Panc1 (cell line): ENCODE measurements at regions of chr1 and their contacts with region 1.

Region 1: GRCh38 chr1:204363335-204364124 is 3.8 kb upstream of the PLEKHA6 start:
- DNase-seq: peak; percentile 71
- ATAC-seq: peak; percentile 79
- H3K4me3 ChIP-seq: peak overlapping the region; percentile 19 to 52
- H3K27ac ChIP-seq: peak overlapping the region; percentile 51
- H3K4me1 ChIP-seq: peaks cover 5% of the 10 kb centered on the region; the same call in 1 of the 2 replicates
- H3K27me3 ChIP-seq: no peaks in the 10 kb centered on the region
- CTCF ChIP-seq: peak; percentile 96

Region 2: GRCh38 chr1:204213668-204214662 is 149.6 kb before region 1 on chr1 and contains the start of gene GOLT1A:
- CTCF ChIA-PET with region 1: no interaction called
- POLR2A ChIA-PET with region 1: no interaction called
- in situ Hi-C with region 1: no loop called
- intact Hi-C with region 1: loop called (anchors 1 kb)
- DNase-seq: peak; percentile 12
- ATAC-seq: peak; percentile 85
- H3K4me3 ChIP-seq: peak within 1 kb of the TSS; percentile 17 to 28
- H3K27ac ChIP-seq: no peak within 1 kb of the TSS
- H3K4me1 ChIP-seq: no peaks in the 10 kb centered on the region
- H3K27me3 ChIP-seq: peaks cover 3% of the 10 kb centered on the region; the same call in 1 of the 2 replicates
- CTCF ChIP-seq: peak; percentile 79
- total RNA-seq, gene GOLT1A: 0.49 TPM

Region 3: DNA sequence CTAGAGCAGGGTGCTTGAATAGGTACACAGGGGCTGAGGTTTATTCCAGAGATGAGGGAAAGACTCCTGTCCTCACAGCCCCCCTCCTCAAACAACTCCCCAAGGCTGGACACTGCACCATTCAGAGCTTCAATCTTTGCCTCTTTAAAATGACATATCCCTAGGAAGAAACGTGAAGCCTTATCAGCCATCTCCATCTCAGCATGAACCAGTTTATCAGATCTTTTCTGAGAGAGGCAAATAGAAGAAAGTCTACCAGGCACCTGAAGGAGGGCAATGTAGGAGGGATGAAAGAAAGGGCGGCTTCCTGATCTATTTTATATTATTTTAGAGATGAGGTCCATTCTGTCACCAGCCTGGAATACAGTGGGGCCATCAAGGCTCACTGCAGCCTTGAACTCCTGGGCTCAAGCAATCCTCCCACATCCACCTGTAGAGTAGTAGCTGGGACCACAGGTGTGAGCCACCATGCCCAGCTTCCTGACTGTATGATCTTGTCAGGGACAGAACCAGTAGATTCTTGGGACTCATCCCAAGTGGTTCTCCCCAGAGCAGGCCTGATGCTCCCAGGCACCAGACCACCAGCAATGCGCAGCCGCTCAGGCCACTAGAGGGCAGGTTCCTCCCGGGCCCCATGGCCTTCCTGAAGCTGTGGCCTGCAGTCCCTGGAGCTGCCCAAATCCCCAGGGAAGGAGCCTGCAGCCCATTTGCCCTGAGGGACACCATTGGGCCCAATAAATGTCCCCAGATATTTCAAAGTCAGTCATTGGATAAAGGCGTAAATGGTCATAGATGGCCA is 105.4 kb before region 1 on chr1:
- CTCF ChIA-PET with region 1: interaction called, 6 read pairs
- POLR2A ChIA-PET with region 1: no interaction called
- in situ Hi-C with region 1: no loop called
- intact Hi-C with region 1: loop called (anchors 10 kb)
- DNase-seq: peak; percentile 18
- ATAC-seq: peak; percentile 88
- H3K4me3 ChIP-seq: no peak overlapping the region
- H3K27ac ChIP-seq: no peak overlapping the region
- H3K4me1 ChIP-seq: peaks cover 4% of the 10 kb centered on the region; the same call in 1 of the 2 replicates
- H3K27me3 ChIP-seq: no peaks in the 10 kb centered on the region
- CTCF ChIP-seq: peak; percentile 84

Region 4: DNA sequence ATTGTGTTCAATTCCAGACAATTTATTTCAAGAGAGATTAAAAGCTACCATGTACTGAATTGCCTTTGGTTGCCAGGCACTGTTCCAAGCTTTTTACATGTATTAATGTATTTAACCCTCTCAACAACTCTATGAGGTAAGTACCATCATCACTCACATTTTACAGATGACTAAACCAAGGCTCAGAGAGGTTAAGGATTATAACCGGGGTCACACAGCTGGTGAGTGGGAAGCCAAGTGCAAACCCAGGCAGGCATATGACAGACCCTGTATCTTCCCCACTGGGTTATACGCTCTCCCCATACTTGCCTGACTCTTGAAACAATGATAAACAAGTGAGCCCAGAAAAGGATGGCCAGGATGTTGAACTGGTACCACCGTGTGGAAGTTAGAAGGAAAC is 20.3 kb before region 1 on chr1:
- CTCF ChIA-PET with region 1: no interaction called
- POLR2A ChIA-PET with region 1: no interaction called
- in situ Hi-C with region 1: no loop called
- intact Hi-C with region 1: no loop called
- DNase-seq: no peak
- ATAC-seq: no peak
- H3K4me3 ChIP-seq: no peak overlapping the region
- H3K27ac ChIP-seq: no peak overlapping the region
- H3K4me1 ChIP-seq: no peaks in the 10 kb centered on the region
- H3K27me3 ChIP-seq: no peaks in the 10 kb centered on the region
- CTCF ChIP-seq: no peak